ENCODE measurements at regions of chr21 and their contacts with region 1.

Region 1: DNA sequence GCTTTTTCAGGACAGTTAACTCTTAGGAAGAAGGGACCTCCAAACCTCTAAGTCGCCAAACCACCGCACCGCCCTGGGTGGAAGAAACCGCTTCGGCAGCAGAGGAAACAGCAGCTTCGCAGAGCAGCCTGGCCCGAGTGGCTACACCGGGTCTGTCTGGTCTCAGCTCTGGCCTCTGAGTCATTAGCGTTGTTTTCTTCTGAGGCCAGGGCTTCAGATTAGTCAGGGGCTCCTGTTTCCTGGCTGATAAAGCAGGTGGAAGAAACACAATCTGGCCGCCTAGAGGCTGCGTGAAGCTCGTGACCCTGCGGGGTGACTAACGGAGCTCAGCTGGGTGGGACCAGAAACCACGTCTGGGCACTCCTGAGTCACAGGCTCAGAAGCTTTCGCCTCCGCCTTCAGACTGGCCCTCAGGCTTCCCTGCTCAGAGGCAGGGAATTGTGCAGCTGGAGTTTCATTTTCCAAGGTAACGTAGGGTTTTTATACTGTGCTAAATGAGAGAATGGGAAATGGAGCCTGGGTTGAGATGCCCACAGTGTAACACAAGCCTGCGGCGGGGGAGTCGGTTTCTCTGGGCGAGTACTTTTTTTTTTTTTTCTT is 44.9 kb downstream of the CHAF1B start:
- DNase-seq: peak; percentile 97 to 98
- ATAC-seq: peak; percentile 91 to 94
- H3K4me3 ChIP-seq: peak overlapping the region; percentile 56 to 62 (median 58)
- H3K27ac ChIP-seq: peak overlapping the region; percentile 96 to 99 (median 97)
- H3K4me1 ChIP-seq: peaks cover 28 to 29% of the 10 kb centered on the region in 2 donors
- H3K27me3 ChIP-seq: no peaks in the 10 kb centered on the region
- CTCF ChIP-seq: peak in 1 of 5 experiments; percentile 41
- POLR2A ChIP-seq: peak; percentile 98

Region 2: GRCh38 chr21:36385233-36386030 is 44.6 kb before region 1 on chr21 and contains the start of gene CHAF1B:
- in situ Hi-C with region 1: no loop called
- intact Hi-C with region 1: loop called (anchors 1 kb)
- DNase-seq: peak; percentile 56 to 81
- ATAC-seq: peak; percentile 66 to 71
- H3K4me3 ChIP-seq: peak within 1 kb of the TSS; percentile 61 to 89 (median 70)
- H3K27ac ChIP-seq: peak within 1 kb of the TSS; percentile 84 to 94 (median 90)
- H3K4me1 ChIP-seq: peaks cover 30 to 36% of the 10 kb centered on the region in 2 donors
- H3K27me3 ChIP-seq: no peaks in the 10 kb centered on the region
- CTCF ChIP-seq: no peak
- POLR2A ChIP-seq: peak; percentile 84 to 87
- total RNA-seq, gene CHAF1B: 2.5 to 20.2 (median 7.4) TPM

Region 3: DNA sequence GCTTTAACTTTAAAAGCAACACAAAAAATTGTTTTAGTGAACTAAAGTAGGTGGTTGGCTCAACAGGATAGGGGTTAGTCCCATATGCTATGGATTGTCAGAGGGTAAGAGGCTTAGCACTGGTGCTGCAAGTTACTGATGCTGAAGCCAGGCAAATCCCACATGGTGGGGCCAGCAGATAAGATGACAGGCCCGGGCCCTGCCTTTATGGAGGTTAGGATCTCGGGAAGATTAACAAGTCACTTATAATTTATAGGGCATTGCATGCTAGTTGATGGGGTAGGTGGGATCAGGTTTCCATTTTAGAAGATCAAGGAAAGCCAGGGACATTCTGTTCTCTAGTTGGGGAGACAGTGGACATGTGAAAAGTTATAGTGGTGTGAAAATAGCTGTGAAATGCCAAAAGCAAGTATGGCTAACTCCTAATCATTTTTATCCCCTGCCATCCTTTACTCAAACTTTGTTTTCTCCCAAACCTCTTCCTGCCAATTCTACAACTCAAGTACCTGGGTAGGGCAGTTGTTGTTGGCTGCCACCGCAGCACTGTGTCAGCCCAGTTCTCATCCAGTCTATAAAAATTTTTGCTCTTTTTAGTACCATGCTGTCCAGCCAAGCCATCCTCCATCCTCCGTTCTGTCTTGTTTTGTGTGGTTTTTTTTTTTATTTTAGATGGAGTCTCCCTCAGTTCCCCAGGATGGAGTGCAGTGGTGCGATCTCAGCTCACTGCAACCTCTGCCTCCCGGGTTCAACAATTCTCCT is 34.5 kb before region 1 on chr21:
- in situ Hi-C with region 1: no loop called
- intact Hi-C with region 1: loop called (anchors 1 kb)
- DNase-seq: peak; percentile 68 to 88
- ATAC-seq: peak; percentile 96 to 97
- H3K4me3 ChIP-seq: no peak overlapping the region
- H3K27ac ChIP-seq: peak overlapping the region; percentile 84 to 92 (median 87)
- H3K4me1 ChIP-seq: peaks cover 26 to 33% of the 10 kb centered on the region in 2 donors
- H3K27me3 ChIP-seq: no peaks in the 10 kb centered on the region
- CTCF ChIP-seq: peak in 1 of 5 experiments; percentile 12
- POLR2A ChIP-seq: peak in 1 of 2 donors; percentile 40

Region 4: GRCh38 chr21:36640721-36641244 is 210.7 kb after region 1 on chr21:
- in situ Hi-C with region 1: no loop called
- intact Hi-C with region 1: no loop called
- DNase-seq: no peak
- ATAC-seq: no peak
- H3K4me3 ChIP-seq: no peak overlapping the region
- H3K27ac ChIP-seq: no peak overlapping the region
- H3K4me1 ChIP-seq: no peaks in the 10 kb centered on the region
- H3K27me3 ChIP-seq: peaks cover 0 to 16% (median 2%) of the 10 kb centered on the region in 3 donors
- CTCF ChIP-seq: no peak
- POLR2A ChIP-seq: no peak

Region 5: DNA sequence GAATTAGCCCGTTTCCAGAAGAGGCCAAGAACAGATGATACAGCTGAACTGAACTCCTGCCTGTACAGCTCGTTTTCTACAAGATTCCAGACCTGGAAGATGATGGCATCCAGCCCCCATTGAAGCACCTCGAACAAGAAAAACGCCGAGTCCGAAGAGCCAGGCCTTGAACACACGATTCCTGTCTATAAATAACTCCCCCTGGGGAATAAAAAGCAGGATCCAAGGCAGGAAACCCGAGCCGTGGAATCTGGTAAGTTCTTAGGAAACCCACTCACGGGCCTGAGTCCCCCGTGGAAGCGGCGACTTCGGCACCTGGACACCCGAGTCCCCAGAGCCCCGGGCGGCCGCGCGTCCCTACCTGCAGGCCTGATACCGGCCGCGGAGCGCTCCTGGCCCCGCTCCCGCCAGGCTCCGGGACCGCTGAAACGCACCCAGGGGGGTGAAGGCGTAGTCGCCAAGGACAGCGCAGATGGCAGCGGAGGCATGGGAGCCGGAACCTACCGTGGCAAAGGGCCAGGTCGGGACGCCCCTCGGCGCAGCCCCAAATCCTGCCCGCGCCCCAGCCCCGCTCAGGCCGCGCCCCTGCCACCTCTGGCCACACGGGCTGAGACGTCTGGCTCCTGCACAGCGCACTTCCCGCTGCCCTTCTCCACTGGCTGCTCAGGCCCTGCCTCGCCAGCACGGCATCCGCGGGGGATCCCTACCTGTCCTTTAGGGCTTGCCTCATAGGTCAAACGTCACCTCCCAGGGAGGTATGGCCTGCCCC is 550.4 kb after region 1 on chr21:
- in situ Hi-C with region 1: no loop called
- intact Hi-C with region 1: loop called (anchors 5 kb)
- DNase-seq: peak in 1 of 2 donors; percentile 39
- ATAC-seq: peak; percentile 81 to 85
- H3K4me3 ChIP-seq: peak overlapping the region; percentile 56 to 71 (median 64)
- H3K27ac ChIP-seq: peak overlapping the region; percentile 66 to 81 (median 76)
- H3K4me1 ChIP-seq: peaks cover 13 to 16% of the 10 kb centered on the region in 2 donors
- H3K27me3 ChIP-seq: no peaks in the 10 kb centered on the region
- CTCF ChIP-seq: peak in 2 of 5 experiments; percentile 29 to 38
- POLR2A ChIP-seq: no peak